BJ (cell line): ENCODE measurements at regions of chr2 and their contacts with region 1.

Region 1: DNA sequence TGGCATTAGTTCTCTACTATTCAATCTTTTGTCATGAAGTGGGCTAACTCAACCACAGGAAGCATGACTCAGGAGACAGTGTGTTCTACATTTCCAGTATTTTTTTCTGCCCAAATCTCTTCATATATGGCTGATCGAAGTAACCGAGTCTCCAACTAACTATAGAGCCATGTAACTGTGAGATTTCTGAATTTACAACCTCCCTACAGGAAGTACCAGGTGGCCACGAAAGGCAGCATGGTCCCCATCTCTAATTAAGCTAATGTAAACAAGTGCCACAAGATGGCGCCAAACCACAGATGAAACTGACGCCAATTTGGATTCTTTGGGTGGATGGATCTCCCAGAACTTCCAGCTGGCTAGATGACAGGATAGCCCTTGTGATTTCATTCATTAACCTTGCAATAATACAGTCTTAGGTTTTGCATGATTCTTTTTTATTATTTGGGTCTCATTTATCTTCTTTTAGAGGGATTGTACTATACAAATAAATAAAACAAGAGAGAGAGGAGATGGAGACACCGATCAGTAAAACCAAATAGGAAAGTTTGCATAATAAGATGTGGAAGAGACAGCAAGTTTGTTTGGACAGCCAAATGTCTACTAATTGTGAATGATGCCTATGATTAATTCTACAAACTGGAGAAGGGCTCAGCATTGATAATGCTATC is 18.3 kb upstream of the ARHGAP15 start:
- DNase-seq: peak; percentile 4
- H3K4me3 ChIP-seq: no peak overlapping the region
- H3K27me3 ChIP-seq: no peaks in the 10 kb centered on the region
- CTCF ChIP-seq: peak; percentile 68

Region 2: GRCh38 chr2:143223556-143223955 is 112.7 kb after region 1 on chr2:
- CTCF ChIA-PET with region 1: interaction called, 11 read pairs
- POLR2A ChIA-PET with region 1: no interaction called
- DNase-seq: no peak
- H3K4me3 ChIP-seq: no peak overlapping the region
- H3K27me3 ChIP-seq: no peaks in the 10 kb centered on the region
- CTCF ChIP-seq: no peak

Region 3: DNA sequence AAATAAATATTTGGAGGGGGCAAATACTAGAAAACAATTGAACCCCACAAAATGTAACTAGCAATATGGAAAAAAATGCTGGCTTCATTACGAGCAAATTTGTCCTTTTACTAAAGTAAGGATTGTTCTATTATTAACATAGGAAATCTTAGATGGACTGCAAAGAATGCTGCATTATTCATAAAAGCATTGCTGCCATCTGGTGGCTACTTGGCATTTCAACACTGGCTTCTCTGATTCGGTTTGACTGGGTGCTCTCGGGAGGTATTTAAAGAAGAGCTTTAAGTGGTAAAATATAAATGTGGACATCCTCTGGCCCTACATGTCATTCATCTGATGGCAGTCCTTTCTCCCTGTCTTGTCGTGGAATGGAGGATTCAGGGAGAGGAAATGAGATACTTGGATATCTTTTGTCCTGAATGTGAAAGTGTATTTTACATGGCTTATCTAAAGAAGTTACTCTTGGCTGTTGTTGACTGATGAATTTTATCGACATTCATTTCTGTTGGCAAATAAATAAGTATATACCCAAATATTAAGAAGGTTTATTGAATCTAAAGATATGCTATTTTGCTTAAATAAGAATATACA is 148.6 kb after region 1 on chr2:
- CTCF ChIA-PET with region 1: interaction called, 24 read pairs
- POLR2A ChIA-PET with region 1: no interaction called
- DNase-seq: peak; percentile 18
- H3K4me3 ChIP-seq: no peak overlapping the region
- H3K27me3 ChIP-seq: no peaks in the 10 kb centered on the region; the same call in 1 of the 2 replicates
- CTCF ChIP-seq: peak; percentile 82